HepG2 (cell line): ENCODE measurements at regions of chr7 and their contacts with region 1.

Region 1: DNA sequence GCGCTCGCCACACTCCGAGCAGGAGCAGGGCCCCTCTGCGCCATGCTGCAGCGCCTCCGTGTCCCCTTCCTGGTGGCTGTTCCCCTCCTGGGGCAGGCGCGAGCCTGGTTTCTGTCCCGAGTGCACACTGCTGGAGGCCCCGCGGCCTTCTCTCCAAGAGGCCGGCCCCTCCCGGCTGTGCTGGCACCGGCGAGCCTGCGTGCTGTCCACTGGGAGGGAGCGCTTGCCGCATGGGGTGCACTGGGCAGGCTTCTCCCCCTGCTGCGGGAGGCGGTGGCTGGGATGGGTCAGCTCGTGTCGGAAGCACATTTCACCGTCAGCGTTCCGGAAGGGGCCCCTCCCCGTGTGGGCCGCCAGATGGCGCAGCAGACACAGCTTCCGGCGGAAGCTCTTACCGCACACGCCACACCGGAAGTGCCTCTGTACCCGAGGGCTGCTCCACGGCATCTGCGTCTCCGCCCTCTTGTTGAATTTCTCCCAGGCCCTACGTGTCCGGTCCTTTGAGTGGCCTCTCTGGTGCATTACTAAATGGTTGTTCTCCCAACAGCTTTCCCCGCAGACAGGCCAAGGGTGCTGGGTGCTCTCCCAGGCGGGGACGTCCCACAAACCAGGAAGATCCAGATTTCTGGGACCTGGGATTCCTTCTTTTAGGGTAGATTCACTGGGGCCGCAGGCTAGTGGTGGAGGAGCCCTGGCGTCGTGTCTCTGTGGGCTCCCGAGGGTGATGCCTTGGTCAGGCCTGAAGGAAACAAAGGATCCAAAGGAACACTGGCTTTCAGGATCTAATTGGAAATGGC is 18.7 kb downstream of the ZNF786 start:
- DNase-seq: no peak
- ATAC-seq: peak; percentile 69
- H3K4me3 ChIP-seq: no peak overlapping the region
- H3K27ac ChIP-seq: no peak overlapping the region
- H3K4me1 ChIP-seq: no peaks in the 10 kb centered on the region
- H3K27me3 ChIP-seq: no peaks in the 10 kb centered on the region
- CTCF ChIP-seq: peak; percentile 61
- EP300 ChIP-seq: no peak
- POLR2A ChIP-seq: no peak
- RAD21 ChIP-seq: no peak

Region 2: DNA sequence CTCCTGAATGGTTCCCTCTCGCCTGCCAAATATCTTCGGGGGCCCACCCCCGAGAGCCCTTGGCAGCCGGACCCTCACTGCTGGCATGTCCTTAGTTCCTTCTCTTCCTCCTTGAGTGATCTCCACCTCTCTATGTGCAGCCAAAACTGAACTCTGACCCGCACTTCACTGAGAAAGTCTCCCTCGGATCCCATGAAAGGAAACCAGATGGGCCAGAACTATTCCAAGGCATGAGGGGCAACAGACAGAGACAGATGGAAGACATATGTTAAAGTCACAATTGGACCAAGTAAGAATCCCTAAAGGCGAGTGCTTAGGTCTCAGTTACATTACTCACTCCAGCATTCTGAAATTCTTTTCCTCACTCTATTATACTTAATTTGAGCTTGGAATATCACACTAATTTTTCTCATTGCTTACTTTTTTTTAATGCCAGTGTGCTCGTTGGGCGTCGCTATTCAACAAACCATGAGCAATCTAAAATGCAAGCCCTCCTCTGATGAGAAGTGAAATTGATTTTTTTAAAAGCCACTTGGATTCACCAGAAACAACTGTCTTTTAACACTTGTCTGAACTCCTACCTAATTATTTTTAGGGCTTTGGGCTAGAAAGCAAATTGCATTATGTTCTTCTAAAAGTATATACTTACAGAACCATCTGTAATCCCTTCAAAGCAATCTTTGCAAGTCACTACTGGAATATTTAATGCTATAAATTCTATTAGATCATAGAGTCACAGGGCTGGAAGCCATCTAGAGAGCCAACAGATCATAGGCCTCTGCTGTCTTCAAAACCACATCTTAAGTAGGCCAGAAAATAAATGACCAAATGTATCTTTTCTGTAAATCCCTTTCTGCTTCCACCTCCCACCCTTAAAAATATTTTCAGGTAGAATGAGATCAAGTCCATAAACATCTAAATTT is 144.5 kb before region 1 on chr7:
- CTCF ChIA-PET with region 1: no interaction called
- POLR2A ChIA-PET with region 1: no interaction called
- in situ Hi-C with region 1: no loop called
- intact Hi-C with region 1: no loop called
- DNase-seq: no peak
- ATAC-seq: no peak
- H3K4me3 ChIP-seq: no peak overlapping the region
- H3K27ac ChIP-seq: no peak overlapping the region
- H3K4me1 ChIP-seq: peaks cover 11% of the 10 kb centered on the region
- H3K27me3 ChIP-seq: no peaks in the 10 kb centered on the region
- CTCF ChIP-seq: no peak
- EP300 ChIP-seq: no peak
- POLR2A ChIP-seq: no peak
- RAD21 ChIP-seq: no peak

Region 3: GRCh38 chr7:148987010-148987750 is 84.7 kb before region 1 on chr7:
- CTCF ChIA-PET with region 1: no interaction called
- POLR2A ChIA-PET with region 1: no interaction called
- in situ Hi-C with region 1: no loop called
- intact Hi-C with region 1: loop called (anchors 5 kb)
- DNase-seq: peak; percentile 87
- ATAC-seq: peak; percentile 94
- H3K4me3 ChIP-seq: peak overlapping the region; percentile 78 to 97 (median 88)
- H3K27ac ChIP-seq: peak overlapping the region; percentile 86
- H3K4me1 ChIP-seq: peaks cover 45% of the 10 kb centered on the region
- H3K27me3 ChIP-seq: peaks cover 0 to 3% of the 10 kb centered on the region in 2 experiments; a peak in 1 of 5 replicates
- CTCF ChIP-seq: no peak
- EP300 ChIP-seq: no peak
- POLR2A ChIP-seq: peak in 1 of 2 experiments; percentile 61; a peak in 2 of 4 replicates
- RAD21 ChIP-seq: no peak

Region 4: GRCh38 chr7:149005241-149006050 is 66.4 kb before region 1 on chr7:
- CTCF ChIA-PET with region 1: interaction called, 18 read pairs
- POLR2A ChIA-PET with region 1: no interaction called
- in situ Hi-C with region 1: no loop called
- intact Hi-C with region 1: no loop called
- DNase-seq: peak; percentile 62
- ATAC-seq: peak; percentile 76
- H3K4me3 ChIP-seq: no peak overlapping the region
- H3K27ac ChIP-seq: no peak overlapping the region
- H3K4me1 ChIP-seq: peaks cover 6% of the 10 kb centered on the region; the same call in 1 of the 2 replicates
- H3K27me3 ChIP-seq: no peaks in the 10 kb centered on the region
- CTCF ChIP-seq: peak; percentile 80
- EP300 ChIP-seq: no peak
- POLR2A ChIP-seq: no peak
- RAD21 ChIP-seq: peak; percentile 39; the same call in 1 of the 2 replicates

Region 5: DNA sequence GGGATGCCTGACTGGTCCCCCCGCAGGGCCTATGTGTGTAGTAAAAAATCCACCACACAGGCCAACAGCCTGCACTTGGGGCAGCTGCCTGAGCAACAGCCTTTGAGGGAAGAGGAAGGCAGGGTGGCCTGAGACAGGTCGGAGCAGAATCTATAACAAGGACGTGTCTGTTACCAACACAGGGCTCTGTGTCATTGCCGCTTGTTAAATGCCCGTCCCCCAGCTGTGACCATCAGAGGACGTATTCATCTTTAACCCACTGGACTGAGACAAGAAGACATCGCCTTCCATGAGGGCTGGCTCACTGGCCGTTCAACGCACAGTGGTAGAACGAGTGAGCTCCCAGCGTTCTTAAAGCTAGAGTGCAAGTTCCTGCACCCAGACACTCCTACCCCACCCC is 51.4 kb before region 1 on chr7:
- CTCF ChIA-PET with region 1: no interaction called
- POLR2A ChIA-PET with region 1: no interaction called
- in situ Hi-C with region 1: no loop called
- intact Hi-C with region 1: no loop called
- DNase-seq: no peak
- ATAC-seq: no peak
- H3K4me3 ChIP-seq: no peak overlapping the region
- H3K27ac ChIP-seq: no peak overlapping the region
- H3K4me1 ChIP-seq: peaks cover 21% of the 10 kb centered on the region
- H3K27me3 ChIP-seq: no peaks in the 10 kb centered on the region
- CTCF ChIP-seq: no peak
- EP300 ChIP-seq: no peak
- POLR2A ChIP-seq: no peak
- RAD21 ChIP-seq: no peak